Activated CD4-positive, alpha-beta T cell treated with anti-CD3 and anti-CD28 coated beads for 36 hours (primary cell): ENCODE measurements at regions of chr2 and their contacts with region 1.

Region 1: DNA sequence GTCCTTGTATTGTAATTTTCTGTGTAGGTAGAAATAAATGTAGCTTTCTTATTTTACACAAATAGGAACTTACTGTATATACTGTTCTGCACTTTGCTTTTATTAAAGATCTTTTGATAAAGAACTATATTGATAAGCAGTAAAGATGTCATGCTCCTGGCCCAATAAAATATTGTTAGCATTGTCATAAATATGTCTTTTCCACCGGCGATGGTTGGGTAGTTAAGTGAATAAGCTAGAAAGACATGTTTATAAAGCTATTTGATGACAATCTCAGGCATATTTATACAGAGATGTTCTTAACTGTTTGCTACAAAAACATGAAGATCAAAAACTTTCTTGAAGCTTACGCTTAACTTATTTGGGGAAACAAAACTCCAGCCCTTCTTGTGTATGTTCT is 69.3 kb downstream of the ACTR3 start:
- DNase-seq: no peak
- ATAC-seq: no peak
- H3K4me3 Mint-ChIP-seq: no peak overlapping the region
- H3K27ac Mint-ChIP-seq: no peak overlapping the region
- H3K4me1 Mint-ChIP-seq: peaks cover 6% of the 10 kb centered on the region
- H3K27me3 Mint-ChIP-seq: no peaks in the 10 kb centered on the region

Region 2: DNA sequence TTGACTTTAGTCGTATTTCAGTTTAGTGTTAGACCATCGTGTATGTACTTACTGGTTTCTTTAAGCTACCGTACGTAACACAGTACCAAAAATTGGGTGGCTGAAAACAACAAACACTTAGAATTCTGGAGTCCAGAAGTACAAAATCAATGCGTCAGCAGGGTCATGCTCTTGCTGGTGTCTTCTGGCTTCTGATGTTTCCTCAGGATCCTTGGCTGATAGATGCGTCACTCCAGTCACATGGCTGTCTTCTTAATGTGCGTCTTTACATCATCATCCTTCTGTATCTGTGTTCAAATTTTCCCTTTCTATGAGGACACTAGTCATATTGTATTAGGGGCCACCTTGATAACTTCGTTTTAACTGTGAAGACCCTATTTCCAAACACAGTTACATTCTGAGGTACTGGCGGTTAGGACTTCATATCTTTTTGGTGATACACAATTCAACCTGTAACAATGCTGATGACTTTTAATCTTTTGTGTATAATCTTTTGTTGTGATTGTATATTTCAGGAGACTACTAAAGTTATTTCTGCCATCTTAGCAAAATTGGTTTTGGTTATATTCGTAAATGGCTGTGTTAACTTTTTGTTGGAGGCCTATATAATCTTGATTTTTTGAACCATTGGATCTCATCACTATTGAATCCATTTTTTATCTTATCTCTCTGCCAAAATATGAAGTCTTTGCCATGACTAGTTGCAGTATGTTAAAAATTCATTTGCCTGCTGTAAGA is 44.0 kb before region 1 on chr2:
- CTCF ChIA-PET with region 1: no interaction called
- POLR2A ChIA-PET with region 1: no interaction called
- intact Hi-C with region 1: loop called in 1 of 2 experiments (anchors 5 kb)
- DNase-seq: no peak
- ATAC-seq: no peak
- H3K4me3 Mint-ChIP-seq: no peak overlapping the region
- H3K27ac Mint-ChIP-seq: peak overlapping the region; percentile 60
- H3K4me1 Mint-ChIP-seq: peaks cover 62% of the 10 kb centered on the region
- H3K27me3 Mint-ChIP-seq: no peaks in the 10 kb centered on the region